ENCODE measurements at regions of chr2 and their contacts with region 1.

Region 1: GRCh38 chr2:19868705-19869580 is 32.8 kb downstream of the TTC32 start:
- DNase-seq: no peak
- ATAC-seq: peak; percentile 31
- H3K4me3 ChIP-seq: peak overlapping the region; percentile 60
- H3K27ac ChIP-seq: no peak overlapping the region
- H3K4me1 ChIP-seq: peaks cover 9% of the 10 kb centered on the region
- H3K27me3 ChIP-seq: no peaks in the 10 kb centered on the region
- CTCF ChIP-seq: no peak
- EP300 ChIP-seq: no peak
- POLR2A ChIP-seq: peak; percentile 55
- RAD21 ChIP-seq: no peak

Region 2: GRCh38 chr2:19893520-19894133 is 24.7 kb after region 1 on chr2:
- CTCF ChIA-PET with region 1: interaction called, 3 read pairs
- POLR2A ChIA-PET with region 1: interaction called, 4 read pairs
- RAD21 ChIA-PET with region 1: interaction called, 4 read pairs
- SMC1A ChIA-PET with region 1: interaction called, 4 read pairs
- in situ Hi-C with region 1: no loop called
- intact Hi-C with region 1: loop called (anchors 2 kb)
- DNase-seq: peak; percentile 65
- ATAC-seq: peak; percentile 60
- H3K4me3 ChIP-seq: peak overlapping the region; percentile 10; the same call in 1 of the 2 replicates
- H3K27ac ChIP-seq: peak overlapping the region; percentile 86
- H3K4me1 ChIP-seq: peaks cover 43% of the 10 kb centered on the region
- H3K27me3 ChIP-seq: no peaks in the 10 kb centered on the region
- CTCF ChIP-seq: no peak
- EP300 ChIP-seq: peak in 1 of 2 experiments; percentile 50; a peak in 1 of 4 replicates
- POLR2A ChIP-seq: no peak
- RAD21 ChIP-seq: no peak

Measured in GM12878 (cell line).